Mammary epithelial cell (primary cell): ENCODE measurements at regions of chr17 and their contacts with region 1.

Region 1: GRCh38 chr17:53950207-53950857 is 127.6 kb downstream of the KIF2B start:
- DNase-seq: no peak
- H3K4me3 ChIP-seq: no peak overlapping the region
- H3K27ac ChIP-seq: peak overlapping the region; percentile 61
- H3K4me1 ChIP-seq: peaks cover 18% of the 10 kb centered on the region
- H3K27me3 ChIP-seq: no peaks in the 10 kb centered on the region
- CTCF ChIP-seq: no peak

Region 2: GRCh38 chr17:53722407-53722806 is 227.9 kb before region 1 on chr17:
- CTCF ChIA-PET with region 1: no interaction called
- dilution Hi-C with region 1: no loop called
- in situ Hi-C with region 1: no loop called
- intact Hi-C with region 1: loop called (anchors 2 kb)
- DNase-seq: peak; percentile 98
- H3K4me3 ChIP-seq: no peak overlapping the region
- H3K27ac ChIP-seq: peak overlapping the region; percentile 11
- H3K4me1 ChIP-seq: peaks cover 18% of the 10 kb centered on the region
- H3K27me3 ChIP-seq: no peaks in the 10 kb centered on the region
- CTCF ChIP-seq: no peak

Region 3: GRCh38 chr17:53832393-53832792 is 117.9 kb before region 1 on chr17:
- CTCF ChIA-PET with region 1: no interaction called
- dilution Hi-C with region 1: no loop called
- in situ Hi-C with region 1: no loop called
- intact Hi-C with region 1: no loop called
- DNase-seq: no peak
- H3K4me3 ChIP-seq: no peak overlapping the region
- H3K27ac ChIP-seq: no peak overlapping the region
- H3K4me1 ChIP-seq: no peaks in the 10 kb centered on the region
- H3K27me3 ChIP-seq: no peaks in the 10 kb centered on the region
- CTCF ChIP-seq: no peak